ENCODE measurements at regions of chr10 and their contacts with region 1.

Region 1: GRCh38 chr10:12129222-12130111 is at the start of gene SEC61A2:
- DNase-seq: peak; percentile 96 to 99 (median 97)
- ATAC-seq: peak; percentile 96 to 99 (median 98)
- H3K4me3 ChIP-seq: peak within 1 kb of the TSS; percentile 79 to 99 (median 94)
- H3K27ac ChIP-seq: peak within 1 kb of the TSS; percentile 66 to 95 (median 90)
- H3K4me1 ChIP-seq: peaks cover 0 to 18% (median 5%) of the 10 kb centered on the region in 12 donors
- H3K27me3 ChIP-seq: no peaks in the 10 kb centered on the region
- CTCF ChIP-seq: no peak
- POLR2A ChIP-seq: peak in 1 of 2 donors; percentile 66
- total RNA-seq, gene SEC61A2: 6.9 to 17.0 (median 10.6) TPM

Region 2: DNA sequence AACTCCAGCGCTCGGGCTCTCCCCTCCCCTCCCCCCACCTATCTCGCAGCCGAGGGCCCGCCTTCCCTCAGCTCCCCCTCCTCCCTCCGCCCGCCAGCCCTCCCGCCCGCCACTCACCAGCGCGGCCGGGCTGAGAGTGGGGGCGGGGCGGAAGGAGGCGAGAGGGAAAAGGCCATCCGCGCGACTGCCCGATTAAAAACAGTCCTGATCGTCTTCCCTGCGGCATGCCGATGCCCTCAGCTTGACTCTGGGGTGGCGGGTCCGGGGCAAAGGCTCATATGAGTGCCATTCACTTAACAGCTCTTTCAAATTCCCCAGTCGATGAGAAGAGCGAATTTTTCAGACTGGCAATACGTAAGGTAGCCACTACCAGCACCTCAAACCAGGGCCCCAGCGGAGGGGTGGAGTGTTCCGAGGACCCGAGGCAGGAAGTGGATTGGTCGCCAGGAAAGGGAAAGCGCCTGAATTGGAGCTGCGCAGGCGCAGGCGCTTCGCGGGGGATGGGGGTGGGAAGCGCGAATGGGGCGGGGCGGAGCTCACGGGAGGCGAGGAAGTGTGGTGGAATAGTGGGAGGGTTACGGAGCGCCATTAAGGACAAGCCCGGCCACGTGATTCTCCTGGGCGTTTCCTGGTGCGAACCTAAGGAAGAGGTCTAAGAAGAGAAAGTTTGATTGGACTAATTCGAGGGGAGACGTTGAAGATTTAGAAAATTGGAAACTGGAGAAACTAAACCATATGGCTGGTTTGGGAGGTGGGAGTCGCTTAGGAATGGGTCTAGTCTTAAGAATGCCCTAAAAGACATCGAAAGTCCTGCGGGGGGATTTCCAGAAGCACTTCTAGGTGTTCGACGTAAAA is 86.4 kb before region 1 on chr10 and contains the start of gene UPF2:
- intact Hi-C with region 1: loop called in 1 of 10 experiments (anchors 10 kb)
- DNase-seq: peak; percentile 99
- ATAC-seq: peak; percentile 96 to 98 (median 97)
- H3K4me3 ChIP-seq: peak within 1 kb of the TSS; percentile 78 to 100 (median 98)
- H3K27ac ChIP-seq: peak within 1 kb of the TSS; percentile 92 to 98 (median 96)
- H3K4me1 ChIP-seq: peaks cover 0 to 32% (median 16%) of the 10 kb centered on the region in 12 donors
- H3K27me3 ChIP-seq: no peaks in the 10 kb centered on the region
- CTCF ChIP-seq: no peak
- POLR2A ChIP-seq: no peak
- total RNA-seq, gene UPF2: 12.3 to 20.9 (median 15.8) TPM

Region 3: GRCh38 chr10:12056748-12057147 is 72.7 kb before region 1 on chr10:
- intact Hi-C with region 1: no loop called
- DNase-seq: no peak
- ATAC-seq: no peak
- H3K4me3 ChIP-seq: no peak overlapping the region
- H3K27ac ChIP-seq: no peak overlapping the region
- H3K4me1 ChIP-seq: peaks cover 0 to 15% (median 0%) of the 10 kb centered on the region in 12 donors
- H3K27me3 ChIP-seq: no peaks in the 10 kb centered on the region
- CTCF ChIP-seq: no peak
- POLR2A ChIP-seq: no peak

Region 4: GRCh38 chr10:12068449-12069269 is 60.8 kb before region 1 on chr10 and contains the start of gene DHTKD1:
- intact Hi-C with region 1: loop called in 2 of 10 experiments (anchors 1 to 2 kb)
- DNase-seq: peak; percentile 98 to 100 (median 99)
- ATAC-seq: peak; percentile 99 to 100 (median 100)
- H3K4me3 ChIP-seq: peak within 1 kb of the TSS; percentile 59 to 100 (median 86)
- H3K27ac ChIP-seq: peak within 1 kb of the TSS in 11 of 12 donors; percentile 64 to 92 (median 86)
- H3K4me1 ChIP-seq: peaks cover 0 to 17% (median 8%) of the 10 kb centered on the region in 12 donors
- H3K27me3 ChIP-seq: no peaks in the 10 kb centered on the region
- CTCF ChIP-seq: peak in 11 of 12 donors; percentile 29 to 62 (median 47)
- POLR2A ChIP-seq: peak in 1 of 2 donors; percentile 73
- total RNA-seq, gene DHTKD1: 14.0 to 44.3 (median 31.4) TPM

Region 5: GRCh38 chr10:12081879-12082557 is 47.4 kb before region 1 on chr10:
- intact Hi-C with region 1: no loop called
- DNase-seq: no peak
- ATAC-seq: no peak
- H3K4me3 ChIP-seq: no peak overlapping the region
- H3K27ac ChIP-seq: no peak overlapping the region
- H3K4me1 ChIP-seq: peaks cover 0 to 6% (median 0%) of the 10 kb centered on the region in 12 donors
- H3K27me3 ChIP-seq: no peaks in the 10 kb centered on the region
- CTCF ChIP-seq: no peak
- POLR2A ChIP-seq: no peak

Region 6: DNA sequence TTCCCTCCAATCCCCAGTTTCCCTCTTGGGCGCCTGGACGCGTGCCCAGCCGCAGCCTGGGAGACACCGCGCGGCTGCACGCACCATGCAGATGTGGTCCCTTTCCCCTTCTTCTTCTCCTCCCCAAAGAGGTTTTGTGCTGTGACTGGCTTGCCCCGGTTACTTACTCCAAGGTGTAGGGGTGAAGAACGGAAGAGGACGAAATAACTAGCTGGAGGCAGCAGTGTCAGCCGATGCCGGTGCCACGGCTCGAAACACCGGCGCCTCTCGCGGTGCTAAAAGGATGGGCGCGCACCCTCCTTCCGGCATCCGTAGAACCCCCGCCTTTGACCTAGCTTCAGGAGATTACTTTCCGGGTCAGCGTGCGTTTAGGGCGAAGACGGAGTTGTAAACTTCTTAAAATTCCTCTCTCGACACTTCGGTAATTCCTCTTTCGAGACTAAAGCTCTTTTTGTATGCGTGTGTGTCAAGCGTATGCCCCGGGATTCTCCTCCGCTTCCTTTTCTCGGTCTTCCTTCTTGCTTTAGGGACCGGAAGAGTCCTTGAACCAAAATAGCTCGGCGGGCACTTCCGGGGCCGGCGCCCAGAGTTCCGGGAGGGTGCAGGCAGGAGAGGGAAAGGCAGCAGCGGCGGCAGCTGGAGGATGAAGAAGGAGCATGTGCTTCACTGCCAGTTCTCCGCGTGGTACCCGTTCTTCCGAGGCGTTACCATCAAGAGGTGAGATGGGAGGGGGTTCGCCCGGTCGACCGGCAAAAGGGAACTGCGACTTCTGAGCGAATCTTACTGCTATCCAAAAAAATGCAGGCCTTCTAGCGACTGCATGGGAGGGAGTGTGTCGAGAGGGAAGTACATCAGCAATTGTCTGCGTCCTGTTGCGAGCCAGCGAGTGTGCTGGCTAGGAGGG is 66.4 kb after region 1 on chr10 and contains the starts of genes CDC123 and NUDT5:
- intact Hi-C with region 1: loop called in 2 of 10 experiments (anchors 2 to 5 kb)
- DNase-seq: peak; percentile 87 to 91 (median 88)
- ATAC-seq: peak; percentile 97 to 98 (median 98)
- H3K4me3 ChIP-seq: peak within 1 kb of the TSS; percentile 49 to 91 (median 77)
- H3K27ac ChIP-seq: peak within 1 kb of the TSS; percentile 87 to 99 (median 92)
- H3K4me1 ChIP-seq: peaks cover 0 to 55% (median 25%) of the 10 kb centered on the region in 12 donors
- H3K27me3 ChIP-seq: no peaks in the 10 kb centered on the region
- CTCF ChIP-seq: peak in 1 of 12 donors; percentile 9
- POLR2A ChIP-seq: peak in 1 of 2 donors; percentile 15
- total RNA-seq, gene CDC123: 40.6 to 62.0 (median 52.7) TPM
- total RNA-seq, gene NUDT5: 5.0 to 23.3 (median 8.9) TPM